Upper lobe of right lung (tissue), 1 donor: ENCODE measurements at regions of chr6 and their contacts with region 1.

Region 1: GRCh38 chr6:46407776-46408530 is 83.3 kb downstream of the RCAN2 start:
- DNase-seq: no peak
- ATAC-seq: no peak
- H3K4me3 ChIP-seq: no peak overlapping the region
- H3K27ac ChIP-seq: peak overlapping the region; percentile 34
- H3K4me1 ChIP-seq: peaks cover 4% of the 10 kb centered on the region
- H3K27me3 ChIP-seq: no peaks in the 10 kb centered on the region
- CTCF ChIP-seq: no peak

Region 2: GRCh38 chr6:45930420-45931040 is 477.4 kb before region 1 on chr6:
- intact Hi-C with region 1: loop called (anchors 5 kb)
- DNase-seq: peak; percentile 74
- ATAC-seq: peak; percentile 92
- H3K4me3 ChIP-seq: no peak overlapping the region
- H3K27ac ChIP-seq: no peak overlapping the region
- H3K4me1 ChIP-seq: no peaks in the 10 kb centered on the region
- H3K27me3 ChIP-seq: no peaks in the 10 kb centered on the region
- CTCF ChIP-seq: peak; percentile 97

Region 3: DNA sequence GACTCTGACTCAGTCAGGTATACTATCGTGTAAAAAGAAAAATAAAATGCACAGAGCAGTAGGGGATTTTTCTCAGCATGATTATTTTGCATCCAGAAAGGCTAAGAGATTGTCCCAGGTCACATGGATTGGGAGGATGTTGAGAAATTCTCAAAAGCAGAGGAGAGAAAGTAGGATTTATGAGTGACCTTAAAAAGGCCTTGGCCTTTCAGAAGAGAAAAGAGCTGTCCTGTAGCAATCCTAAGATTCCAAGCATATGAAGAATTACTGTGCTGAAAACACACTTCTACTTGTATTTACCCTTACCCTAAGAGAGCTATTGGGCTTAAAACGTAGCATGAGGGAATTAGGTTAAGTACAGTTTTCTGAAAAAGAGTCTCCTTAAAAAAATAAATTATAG is 87.4 kb before region 1 on chr6:
- intact Hi-C with region 1: no loop called
- DNase-seq: no peak
- ATAC-seq: no peak
- H3K4me3 ChIP-seq: no peak overlapping the region
- H3K27ac ChIP-seq: no peak overlapping the region
- H3K4me1 ChIP-seq: no peaks in the 10 kb centered on the region
- H3K27me3 ChIP-seq: no peaks in the 10 kb centered on the region
- CTCF ChIP-seq: no peak